ENCODE measurements at regions of chr17 and their contacts with region 1.

Region 1: DNA sequence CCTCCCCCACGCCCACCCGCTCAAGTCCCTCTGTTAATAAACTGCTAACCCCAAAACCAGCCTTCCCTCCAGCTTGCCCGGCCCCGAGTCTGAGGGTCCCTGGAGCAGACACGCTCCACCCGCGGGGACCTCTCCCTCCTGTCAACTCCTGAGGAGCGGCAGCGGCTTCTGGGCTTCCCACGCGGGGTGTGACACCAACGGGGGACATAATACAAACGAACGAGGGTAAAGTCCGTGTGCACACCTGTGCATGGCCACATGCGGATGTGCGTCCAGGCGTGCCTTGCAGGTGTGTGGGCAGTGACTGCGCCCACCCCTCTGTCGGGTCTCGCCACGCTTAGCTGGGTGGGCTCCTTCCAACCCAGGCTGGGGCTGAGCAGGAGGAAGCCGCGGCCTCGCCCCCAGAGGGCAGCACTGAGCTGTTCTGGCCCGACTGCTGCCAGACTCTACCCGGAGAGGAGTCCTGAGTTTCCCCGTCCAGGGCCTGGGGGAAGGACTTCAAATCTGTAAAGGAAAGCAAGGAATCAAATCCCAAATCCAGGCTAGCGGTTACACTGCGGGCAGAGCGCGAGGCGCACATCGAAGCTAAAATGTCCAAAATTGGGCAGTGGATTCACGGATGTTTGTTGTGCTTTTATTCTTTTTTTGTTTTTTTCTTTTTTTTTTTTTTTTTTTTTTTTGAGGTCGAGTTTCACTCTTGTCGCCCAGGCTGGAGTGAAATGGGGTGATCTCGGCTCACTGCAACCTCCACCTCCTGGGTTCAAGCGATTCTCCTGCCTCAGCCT is 24.2 kb upstream of the KRT17 start:
- DNase-seq: peak; percentile 93
- ATAC-seq: peak; percentile 95

Region 2: DNA sequence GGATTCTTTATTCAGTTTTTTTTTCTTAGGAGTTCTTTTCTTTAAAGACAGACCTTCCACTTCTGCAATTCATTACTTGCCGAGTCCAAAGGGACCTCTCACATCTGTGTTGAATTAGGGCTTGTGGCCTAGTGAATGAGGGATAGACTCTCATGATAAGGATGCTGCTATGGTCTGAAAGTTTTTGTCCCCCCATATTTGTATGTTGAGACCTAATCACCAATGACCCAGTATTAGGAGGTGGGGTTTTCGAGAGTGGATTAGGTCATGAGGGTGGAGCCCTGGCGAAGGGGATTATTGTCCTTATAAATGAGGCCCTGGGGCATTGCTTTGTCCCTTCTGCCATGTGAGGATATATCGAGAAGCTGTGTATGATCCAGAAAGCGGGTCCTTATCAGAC is 791.1 kb before region 1 on chr17:
- intact Hi-C with region 1: loop called (anchors 5 kb)
- DNase-seq: no peak
- ATAC-seq: peak; percentile 67

Region 3: DNA sequence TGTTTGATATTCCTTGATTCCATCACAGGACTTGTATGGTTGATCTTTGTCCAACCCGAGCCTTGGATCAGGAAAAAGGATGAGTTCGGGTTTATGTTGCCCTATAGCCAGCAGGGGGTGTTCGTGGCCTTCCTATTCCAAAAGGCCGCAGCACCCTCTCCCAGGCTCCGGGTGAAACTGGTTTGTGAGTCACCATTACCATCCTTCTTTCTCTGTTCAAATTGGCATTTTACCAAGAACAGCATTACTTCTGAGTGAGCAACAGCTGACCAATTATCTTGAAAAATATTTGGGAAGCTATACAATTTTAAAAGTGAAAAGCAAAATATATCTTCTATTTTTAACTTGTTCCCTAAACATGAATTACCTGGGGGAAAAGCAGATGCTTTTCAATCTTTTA is 739.3 kb before region 1 on chr17:
- intact Hi-C with region 1: loop called (anchors 5 kb)
- DNase-seq: peak; percentile 82
- ATAC-seq: peak; percentile 90

Region 4: DNA sequence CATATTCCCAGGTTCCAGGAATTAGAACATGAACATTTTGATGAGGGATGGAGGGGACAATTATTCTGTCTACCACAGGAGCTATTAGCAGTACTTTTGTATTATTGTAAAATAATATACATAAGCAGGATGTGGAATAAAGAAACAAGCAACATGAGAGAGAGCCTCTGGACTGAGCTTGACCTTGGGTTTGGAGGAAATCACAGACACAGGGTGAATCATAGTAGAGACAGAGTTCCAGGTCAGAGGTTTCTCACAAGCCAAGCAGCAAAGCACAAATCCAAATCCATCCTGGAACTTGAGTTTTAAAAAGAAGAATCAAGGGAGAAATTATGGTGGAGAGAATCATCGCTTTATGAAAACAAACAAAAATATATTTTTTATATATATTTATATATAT is 256.3 kb before region 1 on chr17:
- intact Hi-C with region 1: no loop called
- DNase-seq: no peak
- ATAC-seq: no peak

Region 5: DNA sequence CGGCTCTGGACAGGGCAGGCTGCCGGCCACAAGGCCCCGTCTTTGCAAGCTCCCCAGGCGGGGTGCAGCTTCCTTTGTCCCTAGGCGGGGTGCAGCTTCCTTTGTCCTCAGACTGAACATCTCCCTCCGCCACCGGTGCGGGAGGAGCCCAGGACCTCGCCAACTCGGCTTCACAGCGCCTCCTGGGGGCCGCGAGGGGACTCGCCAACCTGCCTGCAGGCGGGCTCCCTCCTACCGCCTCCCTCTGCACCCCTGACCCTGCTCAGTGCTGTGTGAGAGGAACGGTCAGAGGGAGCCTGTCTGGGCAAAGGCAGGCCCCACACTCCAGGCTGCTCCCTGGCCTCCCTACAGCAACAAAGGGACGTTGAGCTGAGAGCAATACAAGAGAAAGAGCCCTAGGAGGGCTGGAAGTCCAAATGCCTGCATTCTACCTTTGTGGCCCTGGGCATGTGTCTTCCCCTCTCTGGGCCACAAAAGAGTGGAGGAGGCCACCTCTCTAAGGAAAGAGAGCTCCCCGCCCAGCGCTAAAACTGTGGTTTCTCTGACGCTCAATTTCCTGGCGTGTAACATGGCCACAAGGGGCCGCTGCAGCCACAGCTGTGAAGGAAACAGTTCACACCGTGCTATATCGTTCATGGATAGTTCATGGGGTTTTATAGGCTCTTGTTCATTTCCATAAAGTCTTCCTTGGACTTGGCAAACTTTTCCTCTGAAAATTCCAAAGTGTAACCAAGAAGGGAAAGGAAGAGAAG is 99.6 kb before region 1 on chr17:
- intact Hi-C with region 1: loop called (anchors 1 kb)
- DNase-seq: peak; percentile 92
- ATAC-seq: peak; percentile 85

Region 6: GRCh38 chr17:41579484-41580243 is 68.9 kb before region 1 on chr17:
- intact Hi-C with region 1: loop called (anchors 2 kb)
- DNase-seq: peak; percentile 72
- ATAC-seq: peak; percentile 78

Region 7: GRCh38 chr17:41665566-41666236 is 17.1 kb after region 1 on chr17:
- intact Hi-C with region 1: loop called (anchors 1 kb)
- DNase-seq: peak; percentile 95
- ATAC-seq: peak; percentile 96

Measured in Right ventricle myocardium inferior (tissue), 1 donor.